ENCODE measurements at regions of chr6 and their contacts with region 1.

Region 1: DNA sequence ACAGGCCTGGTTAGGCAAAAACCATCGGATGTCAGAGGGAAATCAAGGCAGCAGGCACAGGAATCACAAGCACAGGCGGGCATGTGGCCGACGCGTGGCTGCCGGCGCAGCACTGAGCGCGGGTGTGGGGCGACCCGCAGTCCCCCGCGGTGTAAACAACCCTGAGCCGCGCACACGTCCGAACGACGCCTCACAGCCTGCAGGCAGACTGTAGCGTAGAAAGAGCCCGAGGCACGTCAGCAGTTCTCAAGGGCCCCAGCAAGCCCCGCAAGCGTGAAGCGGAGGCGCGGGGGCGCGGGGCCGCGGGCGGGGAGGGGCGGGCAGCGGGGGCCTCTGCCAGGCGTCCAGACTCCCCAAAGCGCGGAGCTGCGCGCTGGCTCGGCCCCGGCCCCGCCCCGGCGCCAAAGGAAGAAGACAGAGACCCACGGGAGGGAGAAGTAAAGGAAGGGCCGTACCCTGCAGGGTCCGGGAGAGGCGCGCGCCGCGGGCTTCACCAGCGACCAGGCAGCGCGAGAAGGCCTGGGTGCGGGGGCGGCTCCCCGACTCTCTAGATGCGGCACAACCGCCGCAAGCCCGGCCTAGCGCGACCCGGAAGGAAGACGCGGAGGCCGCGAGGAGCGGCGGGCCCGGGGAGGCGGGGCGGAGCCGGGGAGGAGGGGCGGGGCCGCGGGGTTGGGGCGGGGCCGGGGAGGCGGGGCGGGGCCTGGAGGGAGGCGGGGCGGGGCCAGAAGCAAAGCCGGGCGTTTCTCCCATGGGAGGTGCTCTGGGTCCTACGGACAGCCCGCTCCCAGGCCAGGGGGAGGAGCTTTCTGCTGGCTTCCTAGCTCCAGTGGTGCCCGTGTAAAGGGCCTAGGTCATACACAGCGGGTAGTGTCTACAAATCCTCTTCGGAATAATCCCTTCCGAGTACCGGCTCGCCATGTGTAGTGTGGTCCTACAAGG is at the start of gene FBXL4:
- DNase-seq: peak; percentile 76
- H3K4me3 Mint-ChIP-seq: peak within 1 kb of the TSS; percentile 92
- H3K27ac Mint-ChIP-seq: peak within 1 kb of the TSS; percentile 97
- H3K4me1 Mint-ChIP-seq: peaks cover 24% of the 10 kb centered on the region
- H3K27me3 Mint-ChIP-seq: peaks cover 23% of the 10 kb centered on the region
- total RNA-seq, gene FBXL4: 13.1 and 13.3 TPM in 2 replicates

Region 2: GRCh38 chr6:98310443-98310842 is 637.2 kb before region 1 on chr6:
- intact Hi-C with region 1: no loop called
- DNase-seq: no peak
- H3K4me3 Mint-ChIP-seq: no peak overlapping the region
- H3K27ac Mint-ChIP-seq: no peak overlapping the region
- H3K4me1 Mint-ChIP-seq: no peaks in the 10 kb centered on the region
- H3K27me3 Mint-ChIP-seq: no peaks in the 10 kb centered on the region

Region 3: DNA sequence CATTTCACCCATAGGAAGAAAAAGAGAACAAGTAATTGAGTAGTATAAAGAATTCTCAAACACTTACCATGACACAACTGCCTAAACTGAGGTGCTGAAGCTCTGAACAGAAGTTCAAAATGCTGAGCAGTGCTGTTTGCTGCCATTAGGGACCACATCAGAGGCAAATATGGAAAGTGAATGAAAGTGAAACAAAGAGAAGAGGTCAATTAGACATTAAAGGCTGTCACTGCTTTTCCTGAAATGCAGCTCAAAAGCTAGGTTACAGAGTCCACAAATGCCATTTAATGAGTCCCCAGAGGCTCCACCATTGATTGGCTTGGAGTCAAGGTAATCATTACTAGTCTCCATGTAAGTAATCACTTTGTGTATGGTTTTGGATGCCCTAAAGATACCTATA is 67.1 kb before region 1 on chr6:
- intact Hi-C with region 1: loop called (anchors 2 kb)
- DNase-seq: no peak
- H3K4me3 Mint-ChIP-seq: no peak overlapping the region
- H3K27ac Mint-ChIP-seq: no peak overlapping the region
- H3K4me1 Mint-ChIP-seq: peaks cover 12% of the 10 kb centered on the region
- H3K27me3 Mint-ChIP-seq: no peaks in the 10 kb centered on the region

Region 4: DNA sequence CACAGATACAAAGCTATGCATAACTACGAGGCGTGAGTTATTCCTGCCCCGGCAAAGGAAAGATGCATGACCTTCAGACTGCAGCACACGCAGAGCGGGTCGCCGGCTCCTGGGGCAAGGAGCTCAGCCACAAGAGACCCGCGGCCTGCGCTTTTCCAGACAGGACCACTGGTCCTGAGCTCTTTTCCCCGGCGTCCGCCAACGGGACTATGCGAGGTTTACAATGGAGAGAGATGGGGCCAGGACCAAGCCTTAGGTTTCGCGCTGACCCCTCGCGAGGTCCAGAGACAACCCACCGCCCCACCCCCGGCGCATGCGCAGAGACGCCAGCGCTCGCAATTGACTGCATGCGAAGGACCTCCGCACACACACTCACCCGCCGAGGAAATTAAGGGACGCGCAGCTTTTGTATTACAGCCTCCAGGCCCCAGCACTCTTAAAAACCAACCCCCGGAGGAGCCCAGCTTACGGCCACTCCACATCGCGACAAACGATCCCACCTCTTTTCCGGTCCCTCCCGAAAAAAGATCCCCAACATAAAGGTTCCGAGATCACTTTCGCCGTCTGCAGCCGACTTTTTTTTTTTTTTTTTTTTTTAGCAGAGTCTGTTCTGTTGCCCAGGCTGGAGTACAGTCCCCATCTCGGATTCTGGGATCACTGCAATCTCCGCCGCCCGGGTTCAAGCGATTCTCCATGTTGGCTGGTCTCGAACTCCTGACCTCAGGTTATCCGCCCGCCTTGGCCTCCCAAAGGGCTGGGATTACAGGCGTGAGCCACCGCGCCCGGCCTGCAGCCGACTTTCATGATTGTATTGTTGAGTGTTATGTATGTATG is 446.3 kb after region 1 on chr6 and contains the start of gene COQ3:
- intact Hi-C with region 1: loop called (anchors 1 kb)
- DNase-seq: peak; percentile 56
- H3K4me3 Mint-ChIP-seq: peak within 1 kb of the TSS; percentile 94
- H3K27ac Mint-ChIP-seq: peak within 1 kb of the TSS; percentile 88
- H3K4me1 Mint-ChIP-seq: peaks cover 11% of the 10 kb centered on the region
- H3K27me3 Mint-ChIP-seq: no peaks in the 10 kb centered on the region
- total RNA-seq, gene COQ3: 13.5 and 16.7 TPM in 2 replicates

Region 5: GRCh38 chr6:99520855-99521632 is 573.4 kb after region 1 on chr6:
- intact Hi-C with region 1: loop called (anchors 5 kb)
- DNase-seq: peak; percentile 68
- H3K4me3 Mint-ChIP-seq: peak overlapping the region; percentile 98
- H3K27ac Mint-ChIP-seq: peak overlapping the region; percentile 96
- H3K4me1 Mint-ChIP-seq: peaks cover 20% of the 10 kb centered on the region
- H3K27me3 Mint-ChIP-seq: peaks cover 11% of the 10 kb centered on the region